ENCODE measurements at regions of chr10 and their contacts with region 1.

Region 1: GRCh38 chr10:28676968-28677887 is at the start of gene BAMBI:
- DNase-seq: peak; percentile 94 to 98 (median 97)
- ATAC-seq: peak; percentile 97 to 98
- H3K4me3 ChIP-seq: peak within 1 kb of the TSS; percentile 86
- H3K27ac ChIP-seq: peak within 1 kb of the TSS; percentile 88
- H3K4me1 ChIP-seq: peaks cover 2% of the 10 kb centered on the region
- H3K27me3 ChIP-seq: no peaks in the 10 kb centered on the region
- total RNA-seq, gene BAMBI: 33.3 to 45.3 (median 37.1) TPM

Region 2: DNA sequence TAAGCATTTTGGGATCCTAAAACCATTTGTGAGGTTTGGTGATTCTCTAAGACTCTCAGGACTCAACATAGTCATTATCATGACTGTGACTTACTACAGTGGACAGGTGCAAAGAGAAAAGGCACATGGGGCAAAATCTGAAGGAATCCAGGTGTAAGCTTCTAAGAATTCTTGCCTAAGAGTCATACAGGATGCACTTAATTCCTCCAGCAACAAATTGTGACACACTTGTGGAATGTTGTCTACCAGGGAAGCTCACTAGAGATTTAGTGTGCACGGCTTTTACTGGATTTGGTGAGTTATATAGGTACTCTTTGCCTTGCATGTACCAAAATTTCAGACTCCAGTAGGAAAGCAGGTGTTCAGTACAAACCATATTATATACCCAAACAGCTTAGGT is 96.4 kb before region 1 on chr10:
- intact Hi-C with region 1: no loop called
- DNase-seq: no peak
- ATAC-seq: no peak
- H3K4me3 ChIP-seq: no peak overlapping the region
- H3K27ac ChIP-seq: no peak overlapping the region
- H3K4me1 ChIP-seq: peaks cover 5% of the 10 kb centered on the region
- H3K27me3 ChIP-seq: no peaks in the 10 kb centered on the region

Region 3: GRCh38 chr10:28796606-28797512 is 119.6 kb after region 1 on chr10:
- intact Hi-C with region 1: loop called in 2 of 4 experiments (anchors 10 kb)
- DNase-seq: peak; percentile 86 to 93 (median 89)
- ATAC-seq: peak; percentile 92 to 96
- H3K4me3 ChIP-seq: no peak overlapping the region
- H3K27ac ChIP-seq: no peak overlapping the region
- H3K4me1 ChIP-seq: no peaks in the 10 kb centered on the region
- H3K27me3 ChIP-seq: no peaks in the 10 kb centered on the region

Region 4: GRCh38 chr10:28807760-28808613 is 130.8 kb after region 1 on chr10:
- intact Hi-C with region 1: loop called in 1 of 4 experiments (anchors 10 kb)
- DNase-seq: no peak
- ATAC-seq: peak; percentile 71 to 79
- H3K4me3 ChIP-seq: no peak overlapping the region
- H3K27ac ChIP-seq: peak overlapping the region; percentile 57
- H3K4me1 ChIP-seq: peaks cover 4% of the 10 kb centered on the region
- H3K27me3 ChIP-seq: no peaks in the 10 kb centered on the region

Region 5: DNA sequence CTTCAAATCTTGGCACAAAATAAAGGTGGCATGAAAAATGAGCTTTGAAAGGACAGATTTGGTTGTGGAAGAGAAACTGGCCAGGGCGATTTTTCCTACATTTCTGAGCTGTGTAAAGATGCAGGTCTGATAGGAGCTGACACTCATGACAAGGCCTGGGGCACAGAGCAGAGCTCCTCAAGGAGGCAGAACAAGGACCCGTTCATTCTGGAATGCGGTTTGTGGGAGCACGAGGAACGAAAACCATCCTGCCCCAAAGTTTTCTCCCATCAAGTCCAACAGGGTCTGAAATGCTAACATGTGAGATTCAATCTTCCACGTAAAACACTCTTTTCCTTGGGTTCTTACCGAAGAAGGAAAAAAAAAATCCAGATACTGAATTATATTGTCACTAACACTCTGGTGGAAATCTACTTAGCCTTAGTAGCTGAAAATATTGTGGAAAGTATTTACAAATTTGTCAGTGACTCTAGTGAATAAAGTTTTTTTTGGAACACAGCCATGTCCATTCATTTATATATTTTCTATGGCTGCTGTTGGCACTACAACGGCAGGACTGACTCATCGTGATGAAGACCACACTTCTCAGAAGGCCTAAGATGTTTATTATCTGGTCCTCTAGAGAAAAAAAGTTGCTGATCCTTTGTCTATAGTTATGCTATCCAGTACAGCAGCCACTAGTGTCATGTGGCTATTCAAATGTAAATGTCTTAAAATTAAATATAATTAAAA is 215.8 kb after region 1 on chr10:
- intact Hi-C with region 1: loop called in 3 of 4 experiments (anchors 10 kb)
- DNase-seq: no peak
- ATAC-seq: no peak
- H3K4me3 ChIP-seq: no peak overlapping the region
- H3K27ac ChIP-seq: no peak overlapping the region
- H3K4me1 ChIP-seq: peaks cover 2% of the 10 kb centered on the region
- H3K27me3 ChIP-seq: no peaks in the 10 kb centered on the region

Region 6: GRCh38 chr10:28984431-28984830 is 307.2 kb after region 1 on chr10:
- intact Hi-C with region 1: loop called in 1 of 4 experiments (anchors 2 kb)
- DNase-seq: peak; percentile 93 to 96 (median 95)
- ATAC-seq: peak; percentile 97 to 98
- H3K4me3 ChIP-seq: no peak overlapping the region
- H3K27ac ChIP-seq: peak overlapping the region; percentile 50
- H3K4me1 ChIP-seq: peaks cover 7% of the 10 kb centered on the region
- H3K27me3 ChIP-seq: no peaks in the 10 kb centered on the region

Region 7: DNA sequence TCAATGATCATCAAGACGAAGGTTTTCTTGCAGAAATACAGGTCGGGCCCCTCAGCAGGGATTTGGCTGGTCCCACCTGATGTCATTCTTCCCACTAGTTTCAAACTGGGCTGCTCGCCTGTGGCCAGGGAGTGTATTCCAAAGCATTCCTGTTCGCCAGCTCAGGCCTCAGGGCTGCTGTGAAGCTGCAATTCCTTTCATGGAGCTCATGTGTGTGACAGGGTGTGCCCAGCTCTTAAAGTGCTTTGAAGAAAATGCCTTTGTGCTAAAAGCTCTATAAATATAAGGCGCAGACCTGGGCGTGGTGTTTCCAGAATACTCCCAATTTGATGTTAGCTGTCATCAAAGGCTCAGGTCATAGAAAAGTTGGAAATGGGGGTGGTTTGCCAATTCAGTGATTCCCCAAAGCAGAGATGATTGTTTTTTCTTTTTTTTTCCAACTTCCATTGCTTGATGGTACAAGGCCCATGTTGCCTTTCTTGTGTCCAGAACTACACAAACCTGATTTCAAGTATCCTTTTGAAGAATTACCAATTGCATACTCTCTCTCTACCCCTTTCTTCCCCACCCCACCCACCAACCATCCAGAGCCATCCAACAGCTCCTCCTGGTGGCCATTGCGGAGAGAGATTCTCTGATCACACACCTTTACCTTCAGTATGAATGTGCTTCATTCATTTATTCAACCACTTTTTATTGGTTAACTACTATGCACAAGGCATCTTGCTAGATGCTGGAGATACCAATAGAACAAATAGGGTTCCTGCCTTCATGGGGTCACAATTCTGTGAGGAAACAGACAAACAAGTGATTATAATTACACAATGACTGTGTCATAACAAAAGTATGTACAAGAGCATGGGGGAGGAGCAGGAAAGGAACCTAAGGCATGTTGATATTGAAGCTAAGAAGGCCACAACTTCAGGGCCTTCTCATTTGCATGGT is 314.4 kb after region 1 on chr10:
- intact Hi-C with region 1: loop called in 3 of 4 experiments (anchors 5 kb)
- DNase-seq: peak; percentile 33 to 64 (median 53)
- ATAC-seq: peak; percentile 83 to 85
- H3K4me3 ChIP-seq: no peak overlapping the region
- H3K27ac ChIP-seq: no peak overlapping the region
- H3K4me1 ChIP-seq: no peaks in the 10 kb centered on the region
- H3K27me3 ChIP-seq: no peaks in the 10 kb centered on the region

Measured in right cardiac atrium (tissue), 5 donors.